Esophagus muscularis mucosa (tissue), 4 donors: ENCODE measurements at regions of chr18 and their contacts with region 1.

Region 1: GRCh38 chr18:3771121-3771971 is 321.4 kb downstream of the TGIF1 start:
- DNase-seq: peak; percentile 97
- H3K4me3 ChIP-seq: peak overlapping the region; percentile 39 to 52 (median 41)
- H3K27ac ChIP-seq: peak overlapping the region; percentile 15 to 72 (median 58)
- H3K4me1 ChIP-seq: peaks cover 3 to 28% (median 20%) of the 10 kb centered on the region in 4 donors
- H3K27me3 ChIP-seq: no peaks in the 10 kb centered on the region
- CTCF ChIP-seq: peak; percentile 94 to 97 (median 95)
- EP300 ChIP-seq: no peak
- POLR2A ChIP-seq: no peak

Region 2: GRCh38 chr18:3703732-3704176 is 67.6 kb before region 1 on chr18:
- intact Hi-C with region 1: no loop called
- DNase-seq: no peak
- H3K4me3 ChIP-seq: peak overlapping the region in 2 of 4 donors; percentile 12 to 19
- H3K27ac ChIP-seq: no peak overlapping the region
- H3K4me1 ChIP-seq: peaks cover 0 to 11% (median 10%) of the 10 kb centered on the region in 4 donors
- H3K27me3 ChIP-seq: no peaks in the 10 kb centered on the region
- CTCF ChIP-seq: peak; percentile 60 to 75 (median 61)
- EP300 ChIP-seq: no peak
- POLR2A ChIP-seq: no peak

Region 3: DNA sequence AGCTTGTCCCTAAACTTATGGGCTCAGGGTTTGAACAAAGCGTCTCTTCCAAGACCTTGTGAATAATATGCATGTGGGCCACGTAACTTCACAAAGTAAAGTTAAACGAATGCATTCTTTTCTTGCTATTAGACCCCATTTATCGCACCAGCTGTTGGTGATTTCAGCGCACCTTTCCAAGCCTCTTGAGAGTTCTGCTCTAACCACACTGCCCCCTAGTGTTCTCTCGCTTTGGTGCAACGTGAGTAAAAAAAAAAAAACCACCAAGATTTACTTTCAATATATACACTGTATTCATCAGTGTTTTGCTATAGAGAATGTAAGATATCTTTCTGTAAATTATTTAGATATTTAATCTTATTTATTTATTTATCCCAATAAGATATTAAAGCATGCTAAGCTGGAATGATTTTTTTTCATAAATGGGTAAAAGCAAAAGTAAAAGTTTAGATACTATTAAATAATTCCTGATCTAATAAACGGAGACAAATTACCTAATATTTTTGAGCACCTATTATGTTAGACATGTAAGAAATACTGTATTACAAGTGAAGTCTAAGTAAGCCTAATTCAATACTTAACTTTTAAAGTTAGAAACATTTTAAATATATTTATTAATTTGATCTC is 224.2 kb after region 1 on chr18:
- intact Hi-C with region 1: loop called (anchors 2 kb)
- DNase-seq: no peak
- H3K4me3 ChIP-seq: peak overlapping the region in 1 of 4 donors; percentile 4
- H3K27ac ChIP-seq: no peak overlapping the region
- H3K4me1 ChIP-seq: peaks cover 0 to 4% (median 0%) of the 10 kb centered on the region in 4 donors
- H3K27me3 ChIP-seq: no peaks in the 10 kb centered on the region
- CTCF ChIP-seq: peak; percentile 62 to 84 (median 82)
- EP300 ChIP-seq: no peak
- POLR2A ChIP-seq: no peak

Region 4: DNA sequence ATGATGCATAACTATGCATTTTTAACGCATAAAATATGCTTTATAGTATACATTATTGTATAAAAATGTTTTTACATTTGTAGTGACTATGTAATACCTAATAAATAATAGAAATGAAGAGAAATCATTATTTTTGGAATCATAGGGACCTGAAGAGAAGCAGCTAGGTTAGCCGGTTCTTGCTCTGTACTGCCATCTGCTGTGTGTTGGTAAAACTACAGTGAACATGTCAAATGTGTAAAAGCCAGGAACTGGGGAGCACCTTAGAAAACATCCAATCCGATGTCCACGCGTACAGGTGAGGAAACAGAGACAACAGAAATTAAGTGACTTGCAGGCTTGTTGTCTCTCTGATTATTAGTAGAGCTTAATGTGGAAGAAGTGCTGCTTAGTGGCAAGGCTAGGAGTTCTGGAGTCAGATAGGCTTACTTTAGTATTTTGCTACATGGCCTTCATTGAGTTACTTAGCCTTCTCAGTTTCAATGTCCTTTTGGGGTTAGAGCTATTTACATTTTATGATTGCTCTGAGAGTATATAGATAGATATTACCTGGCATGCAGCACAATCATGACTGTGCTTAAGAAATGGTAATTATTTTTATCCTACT is 297.3 kb after region 1 on chr18:
- intact Hi-C with region 1: loop called (anchors 10 kb)
- DNase-seq: no peak
- H3K4me3 ChIP-seq: no peak overlapping the region
- H3K27ac ChIP-seq: no peak overlapping the region
- H3K4me1 ChIP-seq: no peaks in the 10 kb centered on the region
- H3K27me3 ChIP-seq: peaks cover 0 to 4% (median 0%) of the 10 kb centered on the region in 4 donors
- CTCF ChIP-seq: peak; percentile 40 to 67 (median 58)
- EP300 ChIP-seq: no peak
- POLR2A ChIP-seq: no peak